ENCODE measurements at regions of chr18 and their contacts with region 1.

Region 1: GRCh38 chr18:49892168-49892924 is 79.0 kb upstream of the ACAA2 start:
- DNase-seq: peak; percentile 5 to 71
- H3K4me3 ChIP-seq: no peak overlapping the region
- H3K27ac ChIP-seq: peak overlapping the region; percentile 48
- H3K4me1 ChIP-seq: peaks cover 22% of the 10 kb centered on the region
- H3K27me3 ChIP-seq: no peaks in the 10 kb centered on the region
- CTCF ChIP-seq: no peak

Region 2: GRCh38 chr18:49866680-49867079 is 25.7 kb before region 1 on chr18:
- CTCF ChIA-PET with region 1: interaction called, 3 read pairs
- POLR2A ChIA-PET with region 1: no interaction called
- intact Hi-C with region 1: loop called (anchors 2 kb)
- DNase-seq: peak in 1 of 2 experiments; percentile 23
- H3K4me3 ChIP-seq: no peak overlapping the region
- H3K27ac ChIP-seq: no peak overlapping the region
- H3K4me1 ChIP-seq: peaks cover 6% of the 10 kb centered on the region; the same call in 1 of the 2 replicates
- H3K27me3 ChIP-seq: no peaks in the 10 kb centered on the region
- CTCF ChIP-seq: no peak

Measured in PC-9 (cell line).